ENCODE measurements at regions of chr6 and their contacts with region 1.

Region 1: GRCh38 chr6:155314092-155314772 is at the start of gene TFB1M:
- DNase-seq: peak; percentile 99
- H3K4me3 Mint-ChIP-seq: peak within 1 kb of the TSS; percentile 97
- H3K27ac Mint-ChIP-seq: peak within 1 kb of the TSS; percentile 93
- H3K4me1 Mint-ChIP-seq: peaks cover 30% of the 10 kb centered on the region
- H3K27me3 Mint-ChIP-seq: no peaks in the 10 kb centered on the region
- total RNA-seq, gene TFB1M: 38.7 to 45.3 TPM

Region 2: DNA sequence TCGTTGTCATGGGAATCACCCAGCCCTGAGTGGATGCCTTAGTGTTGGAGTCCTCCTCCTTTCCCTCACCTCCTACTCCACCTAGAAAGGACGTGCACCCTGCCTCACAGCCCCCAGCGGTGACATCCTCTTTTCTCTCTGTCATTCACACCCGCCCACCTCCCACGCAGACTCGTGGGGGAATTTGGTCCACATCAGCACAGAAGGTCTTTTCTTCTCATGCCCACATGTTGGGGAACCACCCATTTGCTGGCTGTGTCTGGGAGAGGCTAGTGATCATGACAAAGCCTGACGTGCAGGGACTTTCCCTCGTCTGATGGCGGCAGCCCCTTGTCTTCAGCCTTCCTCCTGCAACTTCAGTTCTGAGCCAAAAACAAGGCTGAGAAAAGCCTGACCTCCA is 707.8 kb before region 1 on chr6:
- CTCF ChIA-PET with region 1: no interaction called
- intact Hi-C with region 1: loop called (anchors 5 kb)
- DNase-seq: peak; percentile 97
- H3K4me3 Mint-ChIP-seq: peak overlapping the region; percentile 2
- H3K27ac Mint-ChIP-seq: peak overlapping the region; percentile 79
- H3K4me1 Mint-ChIP-seq: peaks cover 40% of the 10 kb centered on the region
- H3K27me3 Mint-ChIP-seq: peaks cover 2% of the 10 kb centered on the region

Region 3: GRCh38 chr6:154733012-154733625 is 581.1 kb before region 1 on chr6 and contains the start of gene SCAF8:
- CTCF ChIA-PET with region 1: no interaction called
- intact Hi-C with region 1: loop called (anchors 1 kb)
- DNase-seq: peak; percentile 83
- H3K4me3 Mint-ChIP-seq: peak within 1 kb of the TSS; percentile 85
- H3K27ac Mint-ChIP-seq: peak within 1 kb of the TSS; percentile 93
- H3K4me1 Mint-ChIP-seq: peaks cover 44% of the 10 kb centered on the region
- H3K27me3 Mint-ChIP-seq: no peaks in the 10 kb centered on the region
- total RNA-seq, gene SCAF8: 27.2 to 28.0 TPM

Region 4: DNA sequence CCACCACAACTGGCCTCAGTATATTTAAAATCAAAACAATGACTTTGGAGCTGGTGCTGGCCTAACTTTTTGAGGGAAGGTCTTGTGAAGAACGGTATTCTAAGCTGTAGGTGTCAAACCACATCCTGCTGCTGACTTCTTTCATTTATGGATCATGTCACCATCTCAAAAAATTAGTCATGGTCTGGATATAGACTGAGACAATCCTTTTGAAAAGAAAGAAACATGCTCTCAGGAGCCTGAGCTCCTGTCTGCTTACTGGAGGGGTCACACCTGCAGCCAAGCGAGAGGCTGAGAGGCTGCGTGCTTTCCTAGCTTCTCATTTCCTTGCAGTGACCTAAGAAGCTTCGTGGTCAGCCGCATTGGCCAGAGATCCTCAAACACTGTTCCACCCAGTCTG is 263.9 kb before region 1 on chr6:
- CTCF ChIA-PET with region 1: no interaction called
- intact Hi-C with region 1: loop called (anchors 1 kb)
- DNase-seq: peak; percentile 63
- H3K4me3 Mint-ChIP-seq: no peak overlapping the region
- H3K27ac Mint-ChIP-seq: peak overlapping the region; percentile 79
- H3K4me1 Mint-ChIP-seq: peaks cover 25% of the 10 kb centered on the region
- H3K27me3 Mint-ChIP-seq: peaks cover 8% of the 10 kb centered on the region

Region 5: DNA sequence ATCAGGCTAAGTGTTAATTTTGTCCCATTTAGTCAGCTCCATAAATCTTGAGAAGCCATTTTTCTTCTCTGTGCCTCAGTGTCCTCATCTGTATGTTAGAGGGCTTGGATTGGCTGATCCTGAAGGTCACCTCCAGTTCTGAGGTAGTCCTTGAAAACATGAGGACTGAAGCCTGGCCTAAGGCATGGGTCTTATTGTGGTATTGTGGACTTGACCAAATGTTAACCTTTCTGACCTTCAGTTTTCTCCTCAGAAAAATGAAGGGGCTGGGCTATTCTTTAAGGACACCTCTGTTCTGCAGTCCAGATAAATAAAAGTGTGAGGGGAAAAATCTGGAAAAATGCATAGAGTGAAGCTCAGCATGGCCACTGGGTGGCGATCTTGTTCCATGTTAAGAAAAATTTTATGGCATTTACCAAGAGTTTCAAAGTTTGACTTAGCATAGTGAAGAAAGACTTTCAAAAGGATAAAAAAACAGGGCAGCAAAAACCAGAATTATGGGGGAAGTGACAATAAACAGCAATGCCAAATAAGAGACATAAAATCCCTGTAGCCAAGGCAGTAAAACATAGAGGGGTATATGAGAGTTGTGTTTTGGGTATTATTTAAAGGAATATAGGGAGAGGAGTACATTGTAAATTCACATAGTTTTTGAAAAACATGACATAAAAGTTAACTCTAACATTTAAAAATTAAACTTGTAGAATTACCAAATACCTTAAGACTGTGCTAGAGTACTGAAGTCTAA is 13.3 kb after region 1 on chr6:
- CTCF ChIA-PET with region 1: interaction called, 16 read pairs
- intact Hi-C with region 1: no loop called
- DNase-seq: peak; percentile 81
- H3K4me3 Mint-ChIP-seq: no peak overlapping the region
- H3K27ac Mint-ChIP-seq: peak overlapping the region; percentile 57
- H3K4me1 Mint-ChIP-seq: peaks cover 28% of the 10 kb centered on the region
- H3K27me3 Mint-ChIP-seq: no peaks in the 10 kb centered on the region

Region 6: DNA sequence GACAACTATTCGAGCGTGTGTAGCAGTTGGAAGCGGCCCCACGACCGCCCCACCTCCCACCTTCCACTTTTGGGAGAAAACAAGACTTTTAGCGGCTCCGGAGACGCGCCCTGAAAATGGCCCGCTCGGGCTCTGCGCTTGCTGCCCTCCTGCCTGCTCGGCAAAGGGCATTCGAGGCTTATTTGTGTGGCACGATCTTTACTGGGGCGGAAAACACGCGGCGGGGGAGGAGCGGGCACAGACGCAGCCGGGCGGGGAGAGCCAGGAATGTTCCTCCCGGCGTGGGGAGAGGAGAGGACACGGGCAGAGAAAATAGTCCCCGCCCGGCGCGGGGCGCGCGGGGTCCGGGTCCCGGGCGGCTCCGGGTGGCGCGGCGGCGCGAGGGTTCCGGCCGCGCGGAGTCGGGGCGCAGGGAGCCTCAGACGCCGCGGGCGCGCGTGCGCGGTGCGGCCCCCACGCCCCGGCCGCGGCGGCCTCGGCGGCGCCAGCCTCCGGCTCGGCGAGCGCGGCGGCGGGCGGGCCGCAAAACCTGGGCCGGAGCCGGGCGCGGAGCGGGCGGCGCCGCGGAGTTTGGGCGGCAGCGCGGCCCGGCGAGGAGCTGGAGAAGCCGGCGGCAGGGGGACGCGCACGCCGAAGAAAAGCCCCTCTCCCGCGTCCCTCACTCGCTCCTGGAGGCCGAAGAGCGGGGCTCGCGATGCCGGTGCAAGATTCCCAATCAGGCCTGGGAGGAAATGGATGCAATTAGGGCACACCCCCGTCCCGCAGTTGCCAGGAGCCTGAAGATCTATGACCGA is 1373.0 kb after region 1 on chr6:
- CTCF ChIA-PET with region 1: no interaction called
- intact Hi-C with region 1: loop called (anchors 2 kb)
- DNase-seq: peak; percentile 63
- H3K4me3 Mint-ChIP-seq: peak overlapping the region; percentile 82
- H3K27ac Mint-ChIP-seq: peak overlapping the region; percentile 91
- H3K4me1 Mint-ChIP-seq: peaks cover 32% of the 10 kb centered on the region
- H3K27me3 Mint-ChIP-seq: no peaks in the 10 kb centered on the region